Mammary epithelial cell (primary cell): ENCODE measurements at regions of chr1 and their contacts with region 1.

Region 1: GRCh38 chr1:118563971-118564951 is 379.2 kb upstream of the SPAG17 start:
- DNase-seq: no peak
- H3K4me3 ChIP-seq: no peak overlapping the region
- H3K27ac ChIP-seq: no peak overlapping the region
- H3K4me1 ChIP-seq: no peaks in the 10 kb centered on the region
- H3K27me3 ChIP-seq: no peaks in the 10 kb centered on the region
- CTCF ChIP-seq: peak in 1 of 2 donors; percentile 29

Region 2: DNA sequence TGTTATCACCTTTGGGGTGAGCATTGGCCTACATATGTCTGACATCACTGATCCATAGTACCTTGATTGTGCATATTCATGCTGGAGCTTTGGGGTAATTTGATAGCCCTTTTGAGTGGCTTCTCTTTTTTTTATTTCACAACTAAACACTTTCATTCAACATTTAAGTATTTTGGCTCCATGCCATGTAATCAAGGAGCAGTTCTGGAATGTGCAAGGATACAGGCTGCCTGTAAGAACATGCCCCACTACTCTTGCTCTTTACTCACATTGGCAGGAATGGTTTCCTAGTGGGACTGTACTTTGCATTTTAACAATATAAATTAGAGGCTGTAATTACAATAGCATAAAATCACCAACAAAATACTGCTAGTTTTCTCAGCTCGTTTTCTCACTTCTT is 78.5 kb before region 1 on chr1:
- CTCF ChIA-PET with region 1: no interaction called
- dilution Hi-C with region 1: no loop called
- in situ Hi-C with region 1: no loop called
- intact Hi-C with region 1: no loop called
- DNase-seq: peak; percentile 74
- H3K4me3 ChIP-seq: peak overlapping the region in 1 of 3 experiments; percentile 11
- H3K27ac ChIP-seq: peak overlapping the region; percentile 33
- H3K4me1 ChIP-seq: peaks cover 18% of the 10 kb centered on the region
- H3K27me3 ChIP-seq: no peaks in the 10 kb centered on the region
- CTCF ChIP-seq: no peak

Region 3: GRCh38 chr1:118826669-118827068 is 262.4 kb after region 1 on chr1:
- CTCF ChIA-PET with region 1: no interaction called
- dilution Hi-C with region 1: no loop called
- in situ Hi-C with region 1: no loop called
- intact Hi-C with region 1: no loop called
- DNase-seq: peak; percentile 26
- H3K4me3 ChIP-seq: no peak overlapping the region
- H3K27ac ChIP-seq: no peak overlapping the region
- H3K4me1 ChIP-seq: no peaks in the 10 kb centered on the region
- H3K27me3 ChIP-seq: no peaks in the 10 kb centered on the region
- CTCF ChIP-seq: no peak

Region 4: GRCh38 chr1:118894836-118895235 is 330.6 kb after region 1 on chr1:
- CTCF ChIA-PET with region 1: interaction called, 17 read pairs
- dilution Hi-C with region 1: no loop called
- in situ Hi-C with region 1: no loop called
- intact Hi-C with region 1: no loop called
- DNase-seq: no peak
- H3K4me3 ChIP-seq: no peak overlapping the region
- H3K27ac ChIP-seq: no peak overlapping the region
- H3K4me1 ChIP-seq: no peaks in the 10 kb centered on the region
- H3K27me3 ChIP-seq: no peaks in the 10 kb centered on the region
- CTCF ChIP-seq: no peak